Activated CD4-positive, alpha-beta memory T cell treated with anti-CD3 and anti-CD28 coated beads, Interleukin-2, amount 10 ng/mL, durations not matched to agents 7 days and 5 days (primary cell): ENCODE measurements at regions of chr2 and their contacts with region 1.

Region 1: DNA sequence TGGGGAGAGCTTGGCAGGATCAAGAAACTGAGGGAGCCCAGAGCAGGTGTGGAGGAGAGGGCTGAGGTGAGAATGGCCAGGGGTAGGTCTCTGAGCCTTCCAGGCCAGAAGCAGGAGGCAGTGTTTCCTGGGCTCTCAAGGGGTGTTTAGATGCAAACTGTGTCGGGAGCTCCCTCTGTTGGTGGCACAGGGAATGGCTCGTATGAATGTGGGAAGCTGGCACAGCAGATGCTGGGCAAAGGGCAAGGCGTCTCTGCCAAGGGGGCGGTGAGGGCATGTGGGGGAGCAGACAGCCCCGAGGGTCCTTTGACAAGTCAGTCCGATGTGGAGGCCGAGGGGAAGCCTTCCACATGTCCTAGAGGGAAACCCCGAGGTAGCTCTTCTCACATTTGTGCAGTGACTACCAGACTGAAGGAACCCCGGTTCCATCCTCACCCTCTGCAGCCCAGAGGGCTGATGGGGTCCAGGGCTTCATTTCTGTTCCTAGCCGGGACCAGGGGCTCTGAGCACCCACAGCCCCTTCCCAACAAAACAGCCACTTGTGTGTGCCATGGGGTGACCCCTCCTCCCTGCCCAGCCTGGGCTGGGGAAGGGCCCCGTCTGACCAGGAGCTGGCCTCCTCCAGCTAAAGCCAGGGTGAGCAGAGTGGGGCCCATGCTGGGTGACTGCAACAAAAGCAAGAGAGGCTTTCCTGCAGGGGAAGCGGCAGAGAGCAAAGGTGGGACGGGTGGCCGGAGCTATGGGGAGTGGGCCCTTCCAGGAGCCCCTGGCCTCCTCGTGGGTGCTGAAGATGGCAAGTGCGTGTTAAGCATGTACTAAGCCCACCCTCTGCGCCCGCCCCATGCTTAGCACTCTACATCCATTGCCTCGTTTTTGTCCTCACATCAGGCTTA is 103.4 kb downstream of the SEPTIN10 start:
- DNase-seq: peak; percentile 79
- H3K4me3 Mint-ChIP-seq: no peak overlapping the region
- H3K27ac Mint-ChIP-seq: no peak overlapping the region
- H3K4me1 Mint-ChIP-seq: peaks cover 16% of the 10 kb centered on the region
- H3K27me3 Mint-ChIP-seq: peaks cover 9% of the 10 kb centered on the region

Region 2: DNA sequence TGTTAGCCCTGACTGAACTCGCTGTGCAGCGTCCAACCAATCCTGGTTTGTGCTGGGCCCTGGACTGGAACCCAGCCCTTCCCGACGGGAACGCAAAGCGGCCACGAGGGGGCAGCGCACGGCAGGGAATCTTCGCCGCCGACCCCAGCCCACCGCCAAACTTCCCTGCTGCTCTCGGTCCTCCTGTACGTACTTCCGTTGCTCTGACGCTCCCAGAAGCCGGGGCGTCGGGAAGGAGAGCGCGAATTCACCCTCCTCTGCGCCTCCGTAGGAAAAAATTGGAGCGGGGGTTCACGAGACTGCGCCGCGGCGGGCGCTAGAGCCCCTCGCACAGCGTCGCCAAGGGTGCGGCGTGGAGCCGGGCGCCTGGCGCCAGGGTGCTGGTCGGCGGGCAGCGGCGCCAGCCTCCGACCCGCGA is 382.3 kb before region 1 on chr2:
- CTCF ChIA-PET with region 1: interaction called, 32 read pairs
- POLR2A ChIA-PET with region 1: no interaction called
- DNase-seq: peak; percentile 57
- H3K4me3 Mint-ChIP-seq: peak overlapping the region; percentile 59
- H3K27ac Mint-ChIP-seq: no peak overlapping the region
- H3K4me1 Mint-ChIP-seq: peaks cover 27% of the 10 kb centered on the region
- H3K27me3 Mint-ChIP-seq: peaks cover 64% of the 10 kb centered on the region

Region 3: DNA sequence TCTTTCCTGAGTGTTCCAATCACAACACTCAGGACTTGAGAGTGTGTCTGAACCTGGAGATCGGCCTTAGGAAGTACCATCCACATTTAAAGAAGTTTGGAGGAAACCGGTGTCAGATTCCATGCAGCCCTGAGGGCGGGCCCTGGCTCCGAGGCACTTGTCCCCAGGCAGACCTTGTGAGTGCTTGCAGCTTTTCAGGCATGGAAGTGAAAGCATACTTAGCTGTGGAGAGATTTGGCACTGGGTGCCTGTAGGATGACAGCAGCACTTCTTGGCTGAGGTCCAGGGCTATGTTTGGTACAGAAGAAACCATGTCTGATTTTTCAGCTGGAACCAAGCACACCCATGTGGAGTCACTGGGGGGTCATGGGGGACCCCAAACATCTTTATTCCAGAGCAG is 127.4 kb before region 1 on chr2:
- CTCF ChIA-PET with region 1: no interaction called
- POLR2A ChIA-PET with region 1: no interaction called
- DNase-seq: no peak
- H3K4me3 Mint-ChIP-seq: no peak overlapping the region
- H3K27ac Mint-ChIP-seq: no peak overlapping the region
- H3K4me1 Mint-ChIP-seq: no peaks in the 10 kb centered on the region
- H3K27me3 Mint-ChIP-seq: peaks cover 11% of the 10 kb centered on the region

Region 4: DNA sequence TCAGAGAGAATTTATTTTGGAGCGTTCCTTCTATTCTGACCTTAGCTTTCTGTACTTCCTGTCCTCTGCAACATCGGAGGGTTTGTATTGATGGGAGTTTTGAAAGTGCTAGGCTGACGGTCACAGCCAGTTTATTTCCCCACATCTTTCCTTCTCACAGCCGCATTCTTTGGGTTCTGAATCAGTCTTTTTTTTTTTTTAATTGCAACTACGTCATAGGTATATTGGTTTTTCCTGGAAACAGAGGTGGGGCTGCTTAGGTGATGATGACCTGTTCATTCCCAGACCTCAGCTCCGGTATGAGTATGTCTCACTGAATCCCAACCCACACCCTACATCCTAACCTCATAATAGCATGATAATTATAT is 192.2 kb after region 1 on chr2:
- CTCF ChIA-PET with region 1: no interaction called
- POLR2A ChIA-PET with region 1: no interaction called
- DNase-seq: no peak
- H3K4me3 Mint-ChIP-seq: no peak overlapping the region
- H3K27ac Mint-ChIP-seq: peak overlapping the region; percentile 53
- H3K4me1 Mint-ChIP-seq: peaks cover 18% of the 10 kb centered on the region
- H3K27me3 Mint-ChIP-seq: peaks cover 13% of the 10 kb centered on the region